ENCODE measurements at regions of chr19 and their contacts with region 1.

Region 1: DNA sequence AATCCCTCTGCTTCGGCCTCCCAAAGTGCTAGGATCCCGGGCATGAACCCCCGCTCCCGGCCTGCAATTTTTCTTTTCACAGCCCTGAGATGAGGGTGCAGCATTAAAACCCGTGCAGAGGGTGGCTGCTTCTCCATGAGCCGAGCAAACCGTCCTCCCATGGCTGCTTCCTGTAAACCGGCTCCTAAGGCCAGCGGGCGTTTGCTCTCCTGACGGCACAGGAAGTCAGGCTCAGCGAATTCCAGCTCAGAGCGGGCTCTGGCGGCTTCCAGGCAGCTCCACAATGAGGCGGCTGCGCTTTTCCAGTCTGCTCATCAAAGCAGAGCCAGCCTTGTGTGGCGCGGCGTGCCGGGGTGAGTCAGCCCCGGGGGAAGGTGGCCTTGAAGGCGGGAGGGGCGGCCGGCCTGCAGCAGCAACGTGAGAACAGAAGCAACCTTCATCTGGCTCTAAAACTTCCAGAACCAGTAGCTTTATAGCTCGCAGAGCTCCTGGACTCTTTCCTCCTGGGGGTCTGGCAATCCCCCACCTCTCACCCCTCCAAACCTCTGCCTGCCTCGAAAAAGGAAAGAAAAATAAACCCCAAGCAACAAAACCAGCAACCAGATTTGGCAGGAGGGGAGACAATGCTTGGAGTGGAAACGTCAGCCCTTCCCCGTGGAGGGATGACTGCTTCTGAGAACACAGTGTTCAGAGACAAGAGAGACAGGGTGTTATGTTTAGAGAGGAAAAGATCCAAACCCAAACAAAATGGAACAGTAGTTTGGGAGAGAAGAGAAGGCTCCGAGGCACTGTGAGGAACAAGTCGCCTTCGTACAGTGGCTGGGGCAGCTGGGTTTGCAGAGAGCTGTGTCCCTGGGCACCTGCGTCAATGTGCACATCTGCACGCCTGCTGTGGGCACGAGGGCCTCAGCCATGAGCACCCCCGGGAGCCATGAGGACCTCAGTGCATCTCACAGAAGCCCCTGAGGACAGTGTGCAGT is 67.8 kb downstream of the GADD45B start:
- DNase-seq: peak; percentile 84 to 99 (median 94)

Region 2: DNA sequence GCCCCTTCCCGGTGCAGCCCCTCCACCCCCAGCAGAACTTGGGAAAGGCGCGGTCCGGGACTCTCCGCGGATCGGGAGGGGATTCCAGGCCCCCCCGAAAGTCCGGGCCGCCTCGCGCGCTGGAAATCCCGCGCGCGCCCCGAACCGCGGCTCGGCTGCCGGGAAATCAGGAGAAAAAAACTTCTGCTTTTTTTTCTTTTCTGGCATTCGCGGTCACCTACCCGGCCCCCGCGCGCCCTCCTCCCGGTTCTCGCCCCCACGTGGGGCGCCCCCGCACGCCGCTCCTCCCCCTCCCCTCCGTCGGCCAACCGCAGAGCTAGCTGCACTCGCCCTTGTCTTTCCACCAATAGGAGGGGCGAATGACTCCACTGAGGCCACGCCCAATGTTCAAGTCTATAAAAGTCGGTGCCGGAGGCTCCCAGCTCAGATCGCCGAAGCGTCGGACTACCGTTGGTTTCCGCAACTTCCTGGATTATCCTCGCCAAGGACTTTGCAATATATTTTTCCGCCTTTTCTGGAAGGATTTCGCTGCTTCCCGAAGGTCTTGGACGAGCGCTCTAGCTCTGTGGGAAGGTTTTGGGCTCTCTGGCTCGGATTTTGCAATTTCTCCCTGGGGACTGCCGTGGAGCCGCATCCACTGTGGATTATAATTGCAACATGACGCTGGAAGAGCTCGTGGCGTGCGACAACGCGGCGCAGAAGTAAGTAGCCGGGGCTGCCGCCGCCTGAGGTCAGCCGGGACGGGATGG is 67.9 kb before region 1 on chr19 and contains the start of gene GADD45B:
- intact Hi-C with region 1: loop called (anchors 5 kb)
- DNase-seq: peak; percentile 95 to 100 (median 97)

Region 3: GRCh38 chr19:2578901-2579677 is 35.3 kb after region 1 on chr19:
- intact Hi-C with region 1: loop called (anchors 5 kb)
- DNase-seq: peak; percentile 71 to 98 (median 84)

Region 4: GRCh38 chr19:2590630-2591399 is 47.1 kb after region 1 on chr19:
- intact Hi-C with region 1: loop called (anchors 1 kb)
- DNase-seq: peak in 3 of 10 donors; percentile 75 to 82 (median 80)

Region 5: GRCh38 chr19:2722541-2723344 is 179.0 kb after region 1 on chr19:
- intact Hi-C with region 1: no loop called
- DNase-seq: peak in 9 of 10 donors; percentile 53 to 95 (median 70)

Region 6: DNA sequence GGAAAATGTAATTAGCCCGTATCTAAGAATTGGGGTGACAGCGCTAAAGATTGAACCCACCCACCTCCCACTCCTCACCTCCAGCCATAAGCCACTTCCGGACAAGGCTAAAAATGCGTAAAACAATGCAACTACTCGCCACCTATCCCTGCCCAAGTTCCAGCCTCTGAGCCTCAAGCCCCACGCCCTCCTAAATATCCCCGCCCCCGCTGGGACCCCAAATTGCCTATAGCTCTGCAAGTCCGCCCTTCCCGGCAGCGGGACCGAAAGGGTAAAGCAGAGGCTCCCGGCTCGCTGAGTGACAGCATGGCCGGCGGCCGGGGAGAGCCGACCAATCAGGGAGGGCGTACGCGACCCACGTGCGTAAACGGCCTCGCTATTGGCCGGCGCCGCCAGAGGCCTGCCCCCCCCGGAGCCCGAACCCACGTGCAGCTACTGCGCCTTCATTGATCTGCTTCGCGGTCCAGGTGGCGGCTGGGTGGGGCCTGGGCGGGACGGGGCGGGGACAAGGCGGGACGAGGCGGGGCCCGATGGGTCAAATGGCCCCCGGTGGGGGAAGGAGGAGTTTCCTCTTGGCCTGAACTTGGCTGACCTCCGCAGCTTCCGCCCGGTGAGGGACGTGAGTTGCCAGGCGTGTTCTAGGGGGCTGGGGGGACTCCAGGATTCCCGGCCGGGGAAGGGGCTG is 433.4 kb after region 1 on chr19 and contains the start of gene TLE6:
- intact Hi-C with region 1: no loop called
- DNase-seq: peak; percentile 87 to 100 (median 93)

Measured in posterior cingulate gyrus (tissue), 11 donors.